Dorsolateral prefrontal cortex (tissue), 120 donors: ENCODE measurements at regions of chr12 and their contacts with region 1.

Region 1: GRCh38 chr12:129903956-129904829 is at the start of gene TMEM132D:
- DNase-seq: peak in 6 of 10 donors; percentile 37 to 71 (median 53)
- H3K4me3 ChIP-seq: peak within 1 kb of the TSS; percentile 29 to 71 (median 56)
- H3K27ac ChIP-seq: peak within 1 kb of the TSS in 44 of 59 donors; percentile 12 to 79 (median 52)
- H3K27me3 ChIP-seq: peaks cover 0 to 38% (median 22%) of the 10 kb centered on the region in 45 donors
- CTCF ChIP-seq: no peak
- total RNA-seq, gene TMEM132D: 9.7 to 40.5 (median 27.2) TPM

Region 2: GRCh38 chr12:128969480-128970055 is 934.6 kb before region 1 on chr12:
- intact Hi-C with region 1: loop called in 1 of 2 experiments (anchors 5 kb)
- DNase-seq: peak; percentile 40 to 86 (median 76)
- H3K4me3 ChIP-seq: peak overlapping the region in 25 of 59 donors; percentile 5 to 42 (median 26)
- H3K27ac ChIP-seq: peak overlapping the region in 49 of 59 donors; percentile 3 to 84 (median 61)
- H3K27me3 ChIP-seq: peaks cover 0 to 17% (median 0%) of the 10 kb centered on the region in 45 donors
- CTCF ChIP-seq: peak in 54 of 56 donors; percentile 14 to 69 (median 56)